Naive thymus-derived CD4-positive, alpha-beta T cell (primary cell): ENCODE measurements at regions of chr2 and their contacts with region 1.

Region 1: GRCh38 chr2:148687543-148687942 is 43.0 kb downstream of the EPC2 start:
- DNase-seq: no peak
- ATAC-seq: no peak
- H3K4me3 ChIP-seq: no peak overlapping the region
- H3K4me3 Mint-ChIP-seq: peak overlapping the region in 2 of 10 donors; percentile 17 to 19
- H3K27ac ChIP-seq: no peak overlapping the region
- H3K27ac Mint-ChIP-seq: peak overlapping the region in 1 of 9 donors; percentile 60
- H3K4me1 ChIP-seq: peaks cover 3 to 17% of the 10 kb centered on the region in 2 donors
- H3K4me1 Mint-ChIP-seq: peaks cover 22 to 88% (median 84%) of the 10 kb centered on the region in 7 donors
- H3K27me3 ChIP-seq: no peaks in the 10 kb centered on the region
- H3K27me3 Mint-ChIP-seq: no peaks in the 10 kb centered on the region

Region 2: DNA sequence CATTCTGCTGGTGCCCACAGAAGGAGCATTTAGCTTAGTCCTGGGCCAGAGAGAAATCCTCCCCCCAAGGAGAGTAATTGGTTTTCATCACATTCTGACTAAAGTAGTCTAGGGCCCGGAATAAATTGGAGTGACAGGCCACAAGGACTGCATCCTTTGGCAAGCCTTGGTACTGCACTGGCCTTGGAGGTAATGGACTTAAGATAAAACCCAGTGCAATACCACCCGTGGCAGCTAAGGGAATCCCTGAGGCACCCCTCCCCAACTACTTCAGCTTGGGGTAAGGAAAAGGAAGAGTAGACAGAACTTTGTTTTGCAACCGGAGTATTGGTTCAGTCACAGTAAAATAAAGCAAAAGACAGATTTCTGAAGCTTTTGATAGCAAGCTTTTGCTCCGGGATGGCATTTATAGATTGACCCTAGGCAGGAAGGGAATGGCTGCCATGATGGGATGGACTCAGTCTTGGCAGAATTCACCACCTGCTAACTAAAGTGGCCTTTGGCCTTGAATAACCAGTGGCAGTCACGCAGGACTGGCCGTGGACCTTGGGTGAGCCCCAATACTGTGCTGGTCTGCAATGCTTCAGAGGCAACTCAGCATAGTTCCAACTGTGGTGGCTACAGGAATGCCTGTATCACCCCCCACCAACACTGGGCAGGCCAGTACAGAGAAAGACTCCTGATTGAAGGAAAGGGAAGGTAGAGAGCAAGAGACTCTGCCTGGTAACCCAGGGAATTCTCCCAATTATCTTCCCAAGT is 681.1 kb before region 1 on chr2:
- CTCF ChIA-PET with region 1: no interaction called
- POLR2A ChIA-PET with region 1: no interaction called
- intact Hi-C with region 1: no loop called
- DNase-seq: no peak
- ATAC-seq: no peak
- H3K4me3 ChIP-seq: no peak overlapping the region
- H3K4me3 Mint-ChIP-seq: no peak overlapping the region
- H3K27ac ChIP-seq: no peak overlapping the region
- H3K27ac Mint-ChIP-seq: no peak overlapping the region
- H3K4me1 ChIP-seq: no peaks in the 10 kb centered on the region
- H3K4me1 Mint-ChIP-seq: peaks cover 4 to 85% (median 76%) of the 10 kb centered on the region in 7 donors
- H3K27me3 ChIP-seq: no peaks in the 10 kb centered on the region
- H3K27me3 Mint-ChIP-seq: no peaks in the 10 kb centered on the region

Region 3: GRCh38 chr2:148493822-148494563 is 193.6 kb before region 1 on chr2:
- CTCF ChIA-PET with region 1: no interaction called
- POLR2A ChIA-PET with region 1: no interaction called
- intact Hi-C with region 1: no loop called
- DNase-seq: no peak
- ATAC-seq: no peak
- H3K4me3 ChIP-seq: no peak overlapping the region
- H3K4me3 Mint-ChIP-seq: no peak overlapping the region
- H3K27ac ChIP-seq: no peak overlapping the region
- H3K27ac Mint-ChIP-seq: no peak overlapping the region
- H3K4me1 ChIP-seq: no peaks in the 10 kb centered on the region
- H3K4me1 Mint-ChIP-seq: peaks cover 0 to 18% (median 13%) of the 10 kb centered on the region in 7 donors
- H3K27me3 ChIP-seq: no peaks in the 10 kb centered on the region
- H3K27me3 Mint-ChIP-seq: no peaks in the 10 kb centered on the region

Region 4: GRCh38 chr2:148674063-148675020 is 13.2 kb before region 1 on chr2:
- CTCF ChIA-PET with region 1: no interaction called
- POLR2A ChIA-PET with region 1: no interaction called
- intact Hi-C with region 1: loop called in 1 of 2 experiments (anchors 2 kb)
- DNase-seq: peak in 6 of 9 donors; percentile 13 to 56 (median 32)
- ATAC-seq: peak; percentile 85
- H3K4me3 ChIP-seq: no peak overlapping the region
- H3K4me3 Mint-ChIP-seq: peak overlapping the region in 9 of 10 donors; percentile 16 to 77 (median 46)
- H3K27ac ChIP-seq: no peak overlapping the region
- H3K27ac Mint-ChIP-seq: peak overlapping the region in 6 of 9 donors; percentile 18 to 85 (median 44)
- H3K4me1 ChIP-seq: peaks cover 6 to 26% of the 10 kb centered on the region in 2 donors
- H3K4me1 Mint-ChIP-seq: peaks cover 44 to 88% (median 83%) of the 10 kb centered on the region in 7 donors
- H3K27me3 ChIP-seq: no peaks in the 10 kb centered on the region
- H3K27me3 Mint-ChIP-seq: no peaks in the 10 kb centered on the region

Region 5: GRCh38 chr2:148701877-148702276 is 14.3 kb after region 1 on chr2:
- CTCF ChIA-PET with region 1: no interaction called
- POLR2A ChIA-PET with region 1: no interaction called
- intact Hi-C with region 1: loop called in 1 of 2 experiments (anchors 2 kb)
- DNase-seq: no peak
- ATAC-seq: no peak
- H3K4me3 ChIP-seq: no peak overlapping the region
- H3K4me3 Mint-ChIP-seq: peak overlapping the region in 5 of 10 donors; percentile 2 to 26 (median 10)
- H3K27ac ChIP-seq: no peak overlapping the region
- H3K27ac Mint-ChIP-seq: peak overlapping the region in 2 of 9 donors; percentile 53 to 58
- H3K4me1 ChIP-seq: no peaks in the 10 kb centered on the region
- H3K4me1 Mint-ChIP-seq: peaks cover 3 to 51% (median 42%) of the 10 kb centered on the region in 7 donors
- H3K27me3 ChIP-seq: no peaks in the 10 kb centered on the region
- H3K27me3 Mint-ChIP-seq: no peaks in the 10 kb centered on the region